GM10248 (cell line): ENCODE measurements at regions of chr4 and their contacts with region 1.

Region 1: GRCh38 chr4:77177199-77177598 is 20.2 kb downstream of the CCNG2 start:
- DNase-seq: no peak
- CTCF ChIP-seq: no peak

Region 2: DNA sequence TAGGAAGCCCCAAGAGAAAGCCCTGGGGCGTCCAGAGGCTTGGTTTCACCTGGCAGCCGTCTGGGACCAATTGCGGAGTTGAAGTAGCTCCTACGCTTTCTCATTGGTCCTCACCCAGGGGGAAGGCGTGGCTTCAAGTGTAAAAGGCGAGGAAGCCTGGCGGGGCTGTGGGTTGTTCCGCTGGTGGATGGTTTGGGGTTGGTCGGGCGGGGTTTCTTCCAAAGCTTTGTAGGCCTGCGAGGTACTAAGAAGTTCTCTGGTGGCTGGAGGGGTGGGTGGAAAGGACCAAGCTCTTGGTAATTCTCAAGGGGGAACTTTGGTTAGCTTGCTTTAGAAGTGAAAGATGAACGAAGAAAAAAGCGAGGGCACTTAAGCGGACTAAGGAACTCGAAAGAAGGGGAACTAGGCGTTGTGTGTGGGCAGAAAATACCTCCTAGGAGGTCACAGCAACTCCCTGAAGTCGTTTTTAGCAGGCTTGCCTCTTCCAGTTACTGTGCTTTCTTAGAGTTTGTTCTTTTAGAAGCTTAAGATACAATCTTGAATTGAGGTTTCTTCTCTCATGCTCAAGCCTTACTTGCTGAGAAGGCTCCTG is 16.4 kb after region 1 on chr4:
- CTCF ChIA-PET with region 1: interaction called, 21 read pairs
- POLR2A ChIA-PET with region 1: no interaction called
- DNase-seq: peak; percentile 88
- CTCF ChIP-seq: no peak